ENCODE measurements at regions of chr4 and their contacts with region 1.

Region 1: DNA sequence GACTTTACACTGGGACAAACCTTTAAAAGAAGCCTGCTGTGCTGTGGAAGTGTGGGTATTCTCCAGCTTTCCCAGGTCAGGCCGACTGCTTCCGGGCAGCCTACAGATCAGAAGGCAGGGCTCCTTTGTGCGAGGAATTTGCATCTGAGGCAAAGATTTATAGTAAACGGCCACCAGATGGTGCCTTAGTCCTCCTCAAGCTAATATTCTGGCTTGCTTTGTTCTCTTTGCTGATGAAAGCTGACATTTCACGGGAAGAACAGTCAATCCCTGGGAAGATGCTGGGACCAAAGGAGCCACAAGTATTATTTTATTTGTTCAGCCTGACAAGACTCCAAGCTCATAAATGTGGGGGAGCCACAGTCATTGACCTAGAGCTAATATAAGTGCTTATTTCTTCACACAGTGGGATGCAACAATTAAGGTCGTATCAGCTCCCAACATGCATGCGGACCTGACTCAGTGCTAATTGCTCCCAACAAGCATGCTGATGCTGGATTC is 120.7 kb upstream of the TRIM2 start:
- DNase-seq: peak in 1 of 2 donors; percentile 84
- ATAC-seq: peak in 2 of 3 donors; percentile 63 to 66
- H3K4me3 ChIP-seq: no peak overlapping the region
- H3K4me3 Mint-ChIP-seq: peak overlapping the region; percentile 78
- H3K27ac ChIP-seq: no peak overlapping the region
- H3K27ac Mint-ChIP-seq: no peak overlapping the region
- H3K4me1 ChIP-seq: peaks cover 45% of the 10 kb centered on the region
- H3K4me1 Mint-ChIP-seq: peaks cover 32 to 34% of the 10 kb centered on the region in 2 donors
- H3K27me3 ChIP-seq: no peaks in the 10 kb centered on the region
- H3K27me3 Mint-ChIP-seq: peaks cover 8 to 9% of the 10 kb centered on the region in 2 donors
- CTCF ChIP-seq: peak; percentile 73

Region 2: GRCh38 chr4:152807294-152807829 is 276.1 kb before region 1 on chr4:
- intact Hi-C with region 1: no loop called
- DNase-seq: peak in 1 of 2 donors; percentile 26
- ATAC-seq: peak in 2 of 3 donors; percentile 64 to 80
- H3K4me3 ChIP-seq: no peak overlapping the region
- H3K4me3 Mint-ChIP-seq: peak overlapping the region; percentile 9
- H3K27ac ChIP-seq: no peak overlapping the region
- H3K27ac Mint-ChIP-seq: peak overlapping the region; percentile 16 to 78
- H3K4me1 ChIP-seq: no peaks in the 10 kb centered on the region
- H3K4me1 Mint-ChIP-seq: peaks cover 39 to 42% of the 10 kb centered on the region in 2 donors
- H3K27me3 ChIP-seq: no peaks in the 10 kb centered on the region
- H3K27me3 Mint-ChIP-seq: no peaks in the 10 kb centered on the region
- CTCF ChIP-seq: no peak

Region 3: DNA sequence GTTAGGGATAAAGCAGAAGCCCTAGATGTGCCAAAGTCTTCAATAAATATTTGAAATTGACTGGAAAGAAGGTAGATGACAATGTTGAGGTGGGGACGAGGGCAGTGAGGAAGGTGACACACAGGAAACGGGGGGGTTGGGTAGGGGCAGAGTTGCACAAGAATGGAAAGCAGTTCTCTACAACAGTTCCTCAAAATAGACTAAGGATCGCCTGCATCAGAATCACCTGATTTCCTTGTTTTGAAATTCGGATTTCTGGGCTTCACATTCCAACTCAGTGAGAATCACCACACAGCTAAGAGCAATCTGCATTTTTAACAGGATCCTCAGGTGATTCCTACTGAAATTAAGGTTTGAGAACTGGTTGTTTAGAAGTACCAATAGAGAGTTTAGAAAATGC is 233.1 kb before region 1 on chr4:
- intact Hi-C with region 1: loop called (anchors 1 kb)
- DNase-seq: peak in 1 of 2 donors; percentile 46
- ATAC-seq: peak; percentile 76 to 85 (median 77)
- H3K4me3 ChIP-seq: no peak overlapping the region
- H3K4me3 Mint-ChIP-seq: peak overlapping the region; percentile 52
- H3K27ac ChIP-seq: no peak overlapping the region
- H3K27ac Mint-ChIP-seq: peak overlapping the region; percentile 9 to 68
- H3K4me1 ChIP-seq: peaks cover 3% of the 10 kb centered on the region
- H3K4me1 Mint-ChIP-seq: peaks cover 14 to 23% of the 10 kb centered on the region in 2 donors
- H3K27me3 ChIP-seq: no peaks in the 10 kb centered on the region
- H3K27me3 Mint-ChIP-seq: no peaks in the 10 kb centered on the region
- CTCF ChIP-seq: no peak

Region 4: DNA sequence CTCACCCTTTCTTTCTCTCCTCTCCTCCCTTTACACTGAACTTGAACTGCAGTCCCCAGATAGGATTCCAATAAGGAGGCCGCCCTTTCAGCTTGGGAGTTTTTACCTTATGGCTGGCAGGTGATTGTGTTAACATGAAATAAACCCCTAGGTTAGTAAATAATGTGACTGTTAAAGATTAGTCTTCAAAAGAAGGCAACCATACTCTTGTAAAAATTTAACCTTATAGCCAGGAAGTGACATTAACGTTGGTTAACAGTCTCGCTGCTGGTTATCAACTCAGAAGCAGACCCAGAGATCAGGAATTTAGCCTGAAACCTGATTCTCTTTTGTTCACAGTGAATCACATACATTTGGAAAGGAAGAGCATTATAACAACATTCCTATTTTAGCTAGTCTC is 132.1 kb before region 1 on chr4:
- intact Hi-C with region 1: no loop called
- DNase-seq: no peak
- ATAC-seq: no peak
- H3K4me3 ChIP-seq: no peak overlapping the region
- H3K4me3 Mint-ChIP-seq: no peak overlapping the region
- H3K27ac ChIP-seq: no peak overlapping the region
- H3K27ac Mint-ChIP-seq: no peak overlapping the region
- H3K4me1 ChIP-seq: peaks cover 2% of the 10 kb centered on the region
- H3K4me1 Mint-ChIP-seq: peaks cover 0 to 5% of the 10 kb centered on the region in 2 donors
- H3K27me3 ChIP-seq: no peaks in the 10 kb centered on the region
- H3K27me3 Mint-ChIP-seq: peaks cover 0 to 6% of the 10 kb centered on the region in 2 donors
- CTCF ChIP-seq: no peak

Region 5: DNA sequence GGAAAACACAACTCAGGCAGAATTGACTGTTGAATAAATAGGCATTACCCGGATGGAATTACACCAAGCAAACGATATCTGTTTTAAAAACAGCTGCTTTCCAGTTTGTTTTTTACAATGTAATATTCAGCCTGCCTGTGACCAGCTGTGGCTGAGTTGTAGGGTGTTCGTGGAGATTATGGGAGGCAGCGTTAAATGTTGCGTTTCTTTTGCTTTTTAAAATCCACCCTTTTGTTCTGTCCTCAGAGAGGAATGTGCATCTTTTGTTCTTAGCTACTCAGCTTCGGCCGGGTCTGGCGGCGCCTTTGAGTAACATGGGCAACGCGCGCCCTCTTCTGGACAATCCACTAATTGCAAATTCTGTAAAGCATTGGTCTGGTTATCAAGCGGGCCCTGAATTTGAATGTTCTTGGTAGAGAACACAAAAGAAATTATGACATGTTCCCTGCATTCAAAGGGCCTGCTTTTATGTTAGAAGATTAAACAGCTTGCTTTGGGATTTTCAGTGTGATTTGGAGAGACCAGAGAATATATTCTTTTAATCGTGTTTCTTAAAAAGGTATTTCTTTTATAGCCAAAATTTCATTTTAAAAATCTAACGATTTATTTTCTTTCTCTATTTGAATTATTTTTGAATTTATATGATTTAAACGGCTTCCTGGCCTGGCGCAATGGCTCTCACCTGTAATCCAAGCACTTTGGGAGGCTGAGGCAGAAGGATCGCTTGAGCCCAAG is 44.4 kb after region 1 on chr4:
- intact Hi-C with region 1: loop called (anchors 1 kb)
- DNase-seq: peak; percentile 73 to 91
- ATAC-seq: peak; percentile 84 to 93 (median 91)
- H3K4me3 ChIP-seq: no peak overlapping the region
- H3K4me3 Mint-ChIP-seq: no peak overlapping the region
- H3K27ac ChIP-seq: no peak overlapping the region
- H3K27ac Mint-ChIP-seq: peak overlapping the region in 1 of 2 donors; percentile 56
- H3K4me1 ChIP-seq: peaks cover 3% of the 10 kb centered on the region
- H3K4me1 Mint-ChIP-seq: peaks cover 6 to 9% of the 10 kb centered on the region in 2 donors
- H3K27me3 ChIP-seq: no peaks in the 10 kb centered on the region
- H3K27me3 Mint-ChIP-seq: peaks cover 5 to 14% of the 10 kb centered on the region in 2 donors
- CTCF ChIP-seq: peak; percentile 87

Region 6: GRCh38 chr4:153643406-153644383 is 560.2 kb after region 1 on chr4:
- intact Hi-C with region 1: loop called (anchors 1 kb)
- DNase-seq: peak in 1 of 2 donors; percentile 74
- ATAC-seq: peak; percentile 86 to 99 (median 98)
- H3K4me3 ChIP-seq: no peak overlapping the region
- H3K4me3 Mint-ChIP-seq: peak overlapping the region; percentile 55
- H3K27ac ChIP-seq: no peak overlapping the region
- H3K27ac Mint-ChIP-seq: peak overlapping the region; percentile 38 to 42
- H3K4me1 ChIP-seq: peaks cover 3% of the 10 kb centered on the region
- H3K4me1 Mint-ChIP-seq: peaks cover 6% of the 10 kb centered on the region in 2 donors
- H3K27me3 ChIP-seq: no peaks in the 10 kb centered on the region
- H3K27me3 Mint-ChIP-seq: no peaks in the 10 kb centered on the region
- CTCF ChIP-seq: peak; percentile 56

Measured in natural killer cell (primary cell).